Right ventricle myocardium inferior (tissue), 1 donor: ENCODE measurements at regions of chr3 and their contacts with region 1.

Region 1: GRCh38 chr3:28726840-28727239 is 378.2 kb upstream of the AZI2 start:
- DNase-seq: peak; percentile 57
- ATAC-seq: peak; percentile 72

Region 2: GRCh38 chr3:28476194-28476593 is 250.6 kb before region 1 on chr3:
- intact Hi-C with region 1: loop called (anchors 1 kb)
- DNase-seq: no peak
- ATAC-seq: no peak

Region 3: DNA sequence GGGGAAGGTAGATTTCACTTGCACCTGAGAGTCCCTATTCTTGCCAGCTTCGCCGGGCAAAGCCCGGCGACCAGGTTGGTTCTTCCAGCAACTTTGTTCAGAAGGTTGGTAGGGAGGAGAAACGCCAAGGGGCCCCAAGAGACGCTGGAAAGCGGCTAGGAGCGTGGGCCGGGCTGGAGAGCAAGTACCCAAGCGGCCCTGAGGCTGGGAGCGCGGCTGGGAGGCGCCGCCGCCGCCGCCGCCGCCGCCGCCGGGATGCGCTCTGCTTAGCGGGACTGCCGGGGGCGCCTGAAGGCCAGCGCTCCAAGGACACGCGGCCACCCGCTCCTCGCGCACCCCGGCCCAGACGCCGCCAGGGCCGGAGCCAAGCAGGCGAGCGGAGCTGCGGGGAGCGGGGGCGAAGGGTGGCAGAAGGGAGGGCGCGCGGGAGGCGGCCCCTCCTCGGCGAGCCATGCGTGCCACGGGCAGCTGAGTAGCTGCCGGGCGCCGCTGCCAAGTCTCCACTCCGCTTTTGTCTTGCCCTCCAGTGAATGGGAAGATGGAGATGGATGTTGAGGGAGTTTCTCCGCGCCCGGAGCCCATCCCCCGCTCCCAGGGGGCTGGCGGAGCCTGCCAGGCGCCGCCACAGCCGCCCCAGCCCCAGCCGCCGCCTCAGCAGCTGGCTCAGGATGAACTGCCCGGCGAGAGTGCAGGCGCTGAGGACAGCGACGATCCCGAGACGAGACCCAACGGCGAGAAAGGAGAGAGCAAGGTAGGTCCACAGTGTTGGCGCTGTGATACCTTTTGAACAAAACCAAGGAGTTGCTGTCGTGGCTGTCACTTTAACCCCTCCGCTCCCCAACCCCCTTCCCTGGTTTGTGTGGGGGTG is 150.9 kb before region 1 on chr3:
- intact Hi-C with region 1: loop called (anchors 10 kb)
- DNase-seq: peak; percentile 35
- ATAC-seq: peak; percentile 87

Region 4: DNA sequence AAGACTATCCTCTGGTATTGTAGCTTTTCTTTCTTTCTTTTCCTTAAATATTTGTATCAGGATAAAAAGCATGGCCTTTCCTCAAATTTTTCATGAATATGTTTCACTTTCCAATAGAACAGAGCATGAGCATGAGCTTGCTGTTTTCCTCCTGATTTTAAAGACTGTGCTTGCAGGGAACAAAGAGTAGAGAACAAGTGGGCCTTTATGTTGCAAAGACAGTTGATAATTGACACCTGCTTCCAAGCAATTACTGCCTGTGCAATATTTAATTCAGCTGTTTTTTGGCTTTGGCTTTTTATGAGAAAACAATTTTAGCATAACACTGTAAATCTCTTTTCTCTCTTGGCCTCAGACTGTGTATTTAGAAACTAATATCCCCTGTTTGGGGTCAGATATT is 114.6 kb before region 1 on chr3:
- intact Hi-C with region 1: no loop called
- DNase-seq: no peak
- ATAC-seq: no peak

Region 5: GRCh38 chr3:28637742-28638141 is 89.1 kb before region 1 on chr3:
- intact Hi-C with region 1: no loop called
- DNase-seq: no peak
- ATAC-seq: no peak

Region 6: DNA sequence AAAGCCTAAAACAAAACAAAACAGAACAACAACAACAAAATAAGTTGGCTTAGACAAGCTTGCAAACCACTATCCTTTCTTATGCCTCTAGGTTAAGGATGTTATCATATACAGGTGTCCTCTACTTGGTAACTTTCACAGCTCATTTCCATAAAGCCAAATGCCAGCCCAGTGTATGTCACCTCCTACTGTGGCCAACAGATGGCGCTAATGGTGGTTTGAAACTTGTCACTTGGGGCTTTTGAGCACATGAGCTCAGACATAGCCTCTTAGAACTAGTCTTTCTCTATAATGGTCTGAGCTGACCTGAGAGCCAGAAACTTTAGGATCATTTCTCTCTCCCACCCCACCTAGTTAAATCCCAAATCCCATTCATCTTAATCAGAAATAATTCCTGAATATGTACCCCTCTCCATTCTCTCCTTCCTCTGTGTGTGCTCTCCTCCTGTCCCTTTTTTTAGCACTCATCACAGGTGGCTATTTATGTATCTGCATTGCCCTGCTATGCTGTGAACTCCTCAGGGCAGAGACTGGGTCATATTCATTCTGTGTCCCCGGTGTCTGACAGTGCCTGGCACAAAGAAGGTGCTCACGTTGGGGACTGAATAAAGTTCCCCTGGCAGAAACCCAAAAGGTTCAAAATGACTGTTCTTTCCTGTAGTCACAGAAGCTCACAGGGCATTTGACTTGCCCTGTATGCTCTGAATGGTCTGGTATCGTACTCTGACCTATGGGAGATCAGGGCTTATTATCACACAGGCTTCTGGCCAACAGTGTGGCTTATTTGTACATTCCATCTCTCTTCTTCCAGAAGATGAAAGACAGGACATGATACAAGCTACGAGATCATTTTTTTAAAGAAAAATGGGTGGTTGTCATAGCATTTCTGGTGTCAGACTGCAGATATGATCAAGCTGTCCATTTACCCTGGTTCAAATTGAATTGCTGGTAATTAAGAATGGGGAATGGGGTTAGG is 58.9 kb before region 1 on chr3:
- intact Hi-C with region 1: loop called (anchors 2 kb)
- DNase-seq: peak; percentile 70
- ATAC-seq: peak; percentile 93

Region 7: DNA sequence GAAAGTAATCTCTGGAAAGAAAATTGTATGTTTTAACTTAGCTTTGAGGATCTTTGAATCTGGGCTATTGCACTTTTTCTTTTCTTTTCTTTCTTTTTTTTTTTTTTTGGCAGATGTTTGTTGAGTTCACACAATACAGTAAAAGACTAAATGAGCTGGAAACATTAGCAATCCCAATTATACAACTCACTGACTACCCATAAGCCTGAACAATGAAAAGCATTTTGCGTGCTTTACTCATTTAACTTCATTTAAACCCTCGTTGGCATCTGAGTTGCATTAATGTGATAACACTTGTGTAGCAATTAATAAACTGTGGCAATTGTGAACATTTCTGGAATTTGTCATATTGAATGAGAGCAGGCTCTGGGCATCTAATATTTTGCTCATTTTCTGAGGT is 284.6 kb after region 1 on chr3:
- intact Hi-C with region 1: no loop called
- DNase-seq: no peak
- ATAC-seq: no peak